HEK293 (cell line): ENCODE measurements at regions of chr5 and their contacts with region 1.

Region 1: GRCh38 chr5:34898258-34898895 is 16.9 kb downstream of the RAD1 start:
- H3K4me3 ChIP-seq: no peak overlapping the region
- H3K27ac ChIP-seq: no peak overlapping the region
- H3K4me1 ChIP-seq: no peaks in the 10 kb centered on the region
- CTCF ChIP-seq: peak; percentile 78

Region 2: GRCh38 chr5:34474573-34475021 is 423.8 kb before region 1 on chr5:
- CTCF ChIA-PET with region 1: interaction called, 57 read pairs
- POLR2A ChIA-PET with region 1: no interaction called
- H3K4me3 ChIP-seq: no peak overlapping the region
- H3K27ac ChIP-seq: no peak overlapping the region
- H3K4me1 ChIP-seq: no peaks in the 10 kb centered on the region
- CTCF ChIP-seq: peak; percentile 69; the same call in 1 of the 2 replicates

Region 3: GRCh38 chr5:34486160-34486848 is 412.1 kb before region 1 on chr5:
- CTCF ChIA-PET with region 1: interaction called, 150 read pairs
- POLR2A ChIA-PET with region 1: interaction called, 3 read pairs
- H3K4me3 ChIP-seq: no peak overlapping the region
- H3K27ac ChIP-seq: no peak overlapping the region
- H3K4me1 ChIP-seq: no peaks in the 10 kb centered on the region
- CTCF ChIP-seq: peak; percentile 79

Region 4: DNA sequence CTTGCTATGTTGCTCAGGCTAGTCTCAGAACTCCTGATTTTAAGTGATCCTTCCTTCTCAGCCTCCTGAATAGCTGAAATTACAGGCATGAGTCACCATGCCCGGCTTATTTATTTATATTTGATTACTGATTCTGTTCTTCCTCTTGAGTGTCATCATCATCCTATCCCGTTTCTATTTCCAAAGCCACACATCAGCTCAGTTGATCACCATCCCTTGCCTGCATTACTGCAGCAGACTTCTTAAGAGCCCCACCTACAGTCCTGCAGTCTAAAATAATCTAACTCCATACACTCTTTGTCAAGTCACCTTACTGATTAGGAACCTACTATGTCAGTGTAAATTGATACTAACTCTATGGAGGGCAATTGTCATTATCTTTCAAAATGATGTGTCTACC is 381.1 kb before region 1 on chr5:
- CTCF ChIA-PET with region 1: interaction called, 156 read pairs
- POLR2A ChIA-PET with region 1: no interaction called
- H3K4me3 ChIP-seq: no peak overlapping the region
- H3K27ac ChIP-seq: no peak overlapping the region
- H3K4me1 ChIP-seq: peaks cover 2% of the 10 kb centered on the region; the same call in 1 of the 2 replicates
- CTCF ChIP-seq: no peak

Region 5: DNA sequence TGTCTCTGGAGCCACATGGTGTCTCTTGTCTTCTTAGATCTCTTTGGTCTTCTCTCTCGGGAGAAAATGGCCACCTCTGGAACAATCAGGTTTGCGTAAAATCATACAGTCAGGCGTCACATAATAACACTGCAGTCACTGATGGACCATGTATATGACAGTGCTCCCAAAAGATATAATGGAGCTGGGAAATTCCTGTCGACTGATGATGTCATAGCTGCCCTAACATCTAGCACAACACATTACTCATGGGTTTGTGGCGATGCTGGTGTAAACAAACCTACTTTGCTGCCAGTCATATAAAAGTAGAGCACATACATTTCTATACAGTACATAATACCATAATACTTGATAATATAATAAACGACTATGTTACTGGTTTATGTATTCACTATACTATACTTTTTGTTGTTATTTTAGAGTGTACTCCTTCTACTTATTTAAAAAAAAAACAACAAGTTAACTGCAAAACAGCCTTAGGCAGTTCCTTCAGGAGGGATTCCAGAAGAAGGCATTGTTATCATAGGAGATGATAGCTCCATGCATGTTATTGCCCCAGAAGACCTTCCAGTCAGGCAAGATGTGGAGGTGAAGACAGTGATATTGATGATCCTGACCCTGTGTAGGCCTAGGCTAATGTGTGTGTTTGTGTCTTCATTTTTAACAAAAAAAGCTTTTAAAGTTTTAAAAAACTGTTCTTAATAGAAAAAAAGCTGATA is 272.2 kb before region 1 on chr5:
- CTCF ChIA-PET with region 1: interaction called, 10 read pairs
- POLR2A ChIA-PET with region 1: no interaction called
- H3K4me3 ChIP-seq: no peak overlapping the region
- H3K27ac ChIP-seq: no peak overlapping the region
- H3K4me1 ChIP-seq: peaks cover 8% of the 10 kb centered on the region
- CTCF ChIP-seq: no peak

Region 6: DNA sequence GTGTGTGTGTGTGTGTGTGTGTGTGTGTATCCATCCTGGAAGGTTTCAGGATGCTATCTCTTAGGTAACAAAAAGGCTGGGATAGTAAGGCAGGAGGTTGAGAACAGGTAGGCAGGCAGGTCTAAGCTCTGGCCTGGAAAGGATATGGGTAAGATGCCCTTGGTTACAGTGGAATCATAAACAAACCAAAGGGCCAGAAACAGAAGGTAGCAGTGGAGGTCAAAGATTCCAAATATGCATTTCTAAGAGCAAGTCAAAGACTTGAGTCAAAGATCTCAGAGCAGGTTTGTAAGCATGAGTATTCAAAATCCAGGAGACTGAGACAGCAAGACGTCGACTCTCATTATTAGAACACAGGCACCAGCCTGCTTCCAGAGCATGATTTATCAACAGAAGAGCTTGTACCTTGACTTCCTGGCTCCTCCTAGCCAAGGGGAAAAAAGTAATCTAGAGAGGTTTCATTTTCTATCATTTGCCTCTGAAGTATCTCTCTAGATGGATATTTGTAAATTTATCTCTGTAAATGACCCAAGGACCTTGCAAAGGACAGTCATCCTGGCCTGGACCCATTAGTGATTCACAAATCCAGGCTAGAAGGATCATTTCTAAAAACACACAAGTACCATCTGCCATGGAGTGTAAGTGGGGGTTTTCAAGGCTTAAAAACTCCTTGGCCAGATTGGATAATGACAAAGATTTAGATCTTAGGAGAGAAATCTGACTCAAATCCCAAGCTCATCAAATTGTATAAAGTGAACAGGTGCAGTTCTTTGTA is 51.5 kb before region 1 on chr5:
- CTCF ChIA-PET with region 1: interaction called, 13 read pairs
- POLR2A ChIA-PET with region 1: no interaction called
- H3K4me3 ChIP-seq: no peak overlapping the region
- H3K27ac ChIP-seq: no peak overlapping the region; the same call in 1 of the 2 replicates
- H3K4me1 ChIP-seq: no peaks in the 10 kb centered on the region
- CTCF ChIP-seq: no peak

Region 7: GRCh38 chr5:34915139-34915855 is 16.9 kb after region 1 on chr5 and contains the starts of genes BRIX1 and RAD1:
- CTCF ChIA-PET with region 1: interaction called, 15 read pairs
- POLR2A ChIA-PET with region 1: interaction called, 9 read pairs
- H3K4me3 ChIP-seq: peak within 1 kb of the TSS; percentile 78
- H3K27ac ChIP-seq: peak within 1 kb of the TSS; percentile 95
- H3K4me1 ChIP-seq: peaks cover 6% of the 10 kb centered on the region; the same call in 1 of the 2 replicates
- CTCF ChIP-seq: peak; percentile 35; the same call in 1 of the 2 replicates

Region 8: GRCh38 chr5:35114698-35115097 is 216.3 kb after region 1 on chr5:
- CTCF ChIA-PET with region 1: no interaction called
- POLR2A ChIA-PET with region 1: no interaction called
- H3K4me3 ChIP-seq: no peak overlapping the region
- H3K27ac ChIP-seq: no peak overlapping the region
- H3K4me1 ChIP-seq: no peaks in the 10 kb centered on the region
- CTCF ChIP-seq: no peak